ENCODE measurements at regions of chr20 and their contacts with region 1.

Region 1: GRCh38 chr20:21702553-21703470 is 2.7 kb upstream of the PAX1 start:
- DNase-seq: peak; percentile 19
- H3K4me3 Mint-ChIP-seq: no peak overlapping the region
- H3K27ac Mint-ChIP-seq: no peak overlapping the region
- H3K4me1 Mint-ChIP-seq: no peaks in the 10 kb centered on the region
- H3K27me3 Mint-ChIP-seq: peaks cover 87% of the 10 kb centered on the region

Region 2: GRCh38 chr20:21395666-21396598 is 306.9 kb before region 1 on chr20:
- intact Hi-C with region 1: loop called (anchors 2 kb)
- DNase-seq: peak; percentile 24
- H3K4me3 Mint-ChIP-seq: peak overlapping the region; percentile 56
- H3K27ac Mint-ChIP-seq: peak overlapping the region; percentile 46
- H3K4me1 Mint-ChIP-seq: peaks cover 20% of the 10 kb centered on the region
- H3K27me3 Mint-ChIP-seq: peaks cover 74% of the 10 kb centered on the region

Region 3: GRCh38 chr20:21513881-21514540 is 188.8 kb before region 1 on chr20 and contains the start of gene NKX2-2:
- intact Hi-C with region 1: loop called (anchors 2 kb)
- DNase-seq: no peak
- H3K4me3 Mint-ChIP-seq: peak within 1 kb of the TSS; percentile 21
- H3K27ac Mint-ChIP-seq: no peak within 1 kb of the TSS
- H3K4me1 Mint-ChIP-seq: peaks cover 15% of the 10 kb centered on the region
- H3K27me3 Mint-ChIP-seq: peaks cover 73% of the 10 kb centered on the region
- total RNA-seq, gene NKX2-2: not detected in 2 replicates

Region 4: GRCh38 chr20:21632031-21632734 is 70.6 kb before region 1 on chr20:
- intact Hi-C with region 1: no loop called
- DNase-seq: no peak
- H3K4me3 Mint-ChIP-seq: no peak overlapping the region
- H3K27ac Mint-ChIP-seq: no peak overlapping the region
- H3K4me1 Mint-ChIP-seq: no peaks in the 10 kb centered on the region
- H3K27me3 Mint-ChIP-seq: no peaks in the 10 kb centered on the region

Region 5: DNA sequence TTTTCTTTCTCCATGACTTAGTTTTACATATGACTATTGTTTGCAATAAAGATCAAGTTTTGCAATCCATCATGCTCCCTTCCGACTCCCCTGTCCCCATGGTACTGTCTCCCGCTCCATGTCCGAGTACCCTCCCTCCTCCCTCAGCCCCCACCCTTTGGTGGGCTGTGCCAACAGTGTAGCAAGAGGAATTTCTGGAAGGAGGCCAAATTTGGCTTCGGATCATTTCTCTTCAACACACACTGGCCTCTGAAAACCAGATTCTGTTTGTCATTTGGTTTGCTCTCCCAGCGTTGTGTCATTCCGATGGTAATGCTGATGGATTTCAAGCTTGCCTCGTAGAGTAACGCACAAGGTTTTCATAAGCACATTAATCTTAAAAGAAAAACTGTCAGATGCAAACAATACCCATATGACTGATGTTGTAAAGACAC is 20.3 kb before region 1 on chr20:
- intact Hi-C with region 1: no loop called
- DNase-seq: no peak
- H3K4me3 Mint-ChIP-seq: no peak overlapping the region
- H3K27ac Mint-ChIP-seq: no peak overlapping the region
- H3K4me1 Mint-ChIP-seq: no peaks in the 10 kb centered on the region
- H3K27me3 Mint-ChIP-seq: no peaks in the 10 kb centered on the region

Region 6: DNA sequence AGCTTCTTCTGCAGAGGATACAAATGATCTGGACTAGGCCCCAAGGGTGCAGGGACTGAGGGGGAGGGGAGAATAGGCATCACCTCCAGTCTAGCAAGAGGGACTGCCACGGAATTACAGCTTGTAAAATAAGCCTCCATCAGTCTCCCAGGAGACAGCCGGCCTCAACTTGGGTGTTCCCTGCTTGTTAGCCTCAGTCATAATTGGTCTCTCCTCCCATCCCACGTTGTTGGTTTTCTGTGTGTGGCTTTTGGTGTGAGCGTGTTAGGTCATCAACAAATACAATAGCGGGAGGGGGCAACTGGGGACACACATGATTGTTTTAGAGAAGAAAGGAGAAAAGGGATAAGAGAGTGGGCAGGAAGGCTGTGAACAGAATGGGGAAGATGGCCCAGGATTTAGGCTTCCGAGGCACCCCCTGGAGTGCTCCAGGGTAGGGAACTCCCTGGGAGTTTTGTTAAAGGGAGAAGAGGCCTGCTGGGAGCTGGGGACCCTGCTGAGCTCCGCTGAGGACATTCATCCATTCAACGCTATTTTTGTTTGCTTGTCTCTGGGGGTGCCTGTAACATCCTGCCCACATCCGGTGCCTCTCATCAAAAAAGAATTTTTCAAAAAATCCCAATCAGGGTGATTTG is 872.4 kb after region 1 on chr20:
- intact Hi-C with region 1: loop called (anchors 5 kb)
- DNase-seq: no peak
- H3K4me3 Mint-ChIP-seq: no peak overlapping the region
- H3K27ac Mint-ChIP-seq: no peak overlapping the region
- H3K4me1 Mint-ChIP-seq: peaks cover 5% of the 10 kb centered on the region
- H3K27me3 Mint-ChIP-seq: peaks cover 72% of the 10 kb centered on the region

Region 7: GRCh38 chr20:23050847-23051631 is 1348.2 kb after region 1 on chr20:
- intact Hi-C with region 1: loop called (anchors 10 kb)
- DNase-seq: peak; percentile 26
- H3K4me3 Mint-ChIP-seq: no peak overlapping the region
- H3K27ac Mint-ChIP-seq: no peak overlapping the region
- H3K4me1 Mint-ChIP-seq: no peaks in the 10 kb centered on the region
- H3K27me3 Mint-ChIP-seq: peaks cover 56% of the 10 kb centered on the region

Measured in activated T-helper 2 cell treated with anti-CD3 and anti-CD28 coated beads, Interferon-gamma antibody, Interleukin-2, Interleukin-4, amounts not matched to agents 10 μg/mL and 5 μg/mL and 100 μg/mL, durations not matched to agents 14 hours and 24 hours and 36 hours (primary cell).